Uterus (tissue), 4 donors: ENCODE measurements at regions of chr20 and their contacts with region 1.

Region 1: DNA sequence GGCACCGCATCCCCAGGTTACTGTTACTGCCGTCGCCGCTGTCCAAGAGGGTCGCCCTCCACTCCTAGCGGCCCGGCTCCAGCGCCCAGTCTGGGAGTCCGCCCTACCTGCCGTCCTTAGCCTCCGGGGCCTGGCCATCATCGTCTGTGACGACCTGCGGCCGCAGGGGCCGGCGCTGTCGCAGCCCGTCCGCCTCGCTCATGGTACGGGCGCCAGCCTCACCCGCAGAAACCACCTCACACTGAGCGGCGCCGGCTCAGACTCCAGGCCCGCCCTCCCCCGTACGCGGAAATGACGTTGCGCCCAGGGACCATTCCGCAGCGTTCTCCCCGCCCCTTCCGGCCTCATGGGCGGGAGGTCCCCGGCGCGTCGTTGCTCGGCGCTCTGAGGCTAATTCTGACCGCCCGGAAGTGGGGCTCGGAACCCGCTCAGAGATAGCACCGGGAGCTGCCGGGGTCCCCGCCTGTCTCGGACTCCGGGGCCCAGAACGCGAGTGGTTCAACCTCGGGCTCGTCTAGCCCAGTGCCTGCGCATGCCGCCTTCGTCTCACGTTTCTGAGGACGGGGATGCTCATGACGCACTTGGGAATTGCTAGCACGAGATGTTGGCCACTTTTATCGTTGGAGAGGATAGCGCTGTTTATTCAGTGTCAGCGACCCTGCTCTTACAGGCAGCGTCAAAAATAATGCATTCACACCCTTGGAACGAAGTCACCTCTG is at the start of gene APMAP:
- DNase-seq: peak; percentile 95 to 96
- H3K4me3 ChIP-seq: peak within 1 kb of the TSS; percentile 75 to 94
- H3K27ac ChIP-seq: peak within 1 kb of the TSS; percentile 90 to 94
- H3K4me1 ChIP-seq: peaks cover 0 to 13% of the 10 kb centered on the region in 2 donors
- H3K27me3 ChIP-seq: no peaks in the 10 kb centered on the region
- CTCF ChIP-seq: peak in 2 of 4 experiments; percentile 5 to 20
- POLR2A ChIP-seq: peak; percentile 95 to 98
- total RNA-seq, gene APMAP: 18.8 to 78.7 (median 57.7) TPM

Region 2: DNA sequence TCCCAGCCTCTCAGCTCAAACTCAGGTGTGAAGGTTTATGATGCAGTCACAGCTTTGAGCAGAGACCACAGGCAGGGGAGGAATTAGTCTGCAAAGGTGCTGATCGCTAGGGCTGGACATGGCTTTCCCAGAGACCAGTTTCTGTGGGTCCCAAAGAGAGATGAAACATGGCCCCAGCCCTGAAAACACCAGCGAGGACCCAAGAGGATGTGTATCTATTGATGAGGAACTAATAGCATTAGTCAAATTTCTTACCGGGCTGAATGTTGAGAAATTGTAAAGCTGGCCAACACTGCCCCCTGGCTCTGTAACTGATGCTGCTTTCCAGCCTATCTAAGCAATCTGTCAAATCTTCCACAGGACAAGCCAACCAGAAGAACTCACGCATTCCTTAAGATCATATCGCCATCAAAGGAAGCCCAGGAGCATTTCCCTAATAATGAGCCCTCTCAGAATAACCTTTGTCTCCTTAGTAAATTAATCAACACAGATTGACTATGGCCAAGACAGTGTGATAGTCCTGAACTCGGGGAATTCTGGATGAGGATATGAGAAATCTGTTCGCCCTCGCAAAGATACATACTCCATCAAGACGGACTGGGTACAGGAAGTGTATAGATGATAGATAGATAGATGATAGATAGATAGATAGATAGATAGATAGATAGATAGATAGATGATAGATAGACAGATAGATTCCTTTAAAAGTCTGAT is 73.1 kb after region 1 on chr20:
- intact Hi-C with region 1: loop called (anchors 2 kb)
- DNase-seq: peak; percentile 67 to 69
- H3K4me3 ChIP-seq: no peak overlapping the region
- H3K27ac ChIP-seq: no peak overlapping the region
- H3K4me1 ChIP-seq: no peaks in the 10 kb centered on the region
- H3K27me3 ChIP-seq: no peaks in the 10 kb centered on the region
- CTCF ChIP-seq: peak; percentile 78 to 93 (median 84)
- POLR2A ChIP-seq: no peak

Region 3: DNA sequence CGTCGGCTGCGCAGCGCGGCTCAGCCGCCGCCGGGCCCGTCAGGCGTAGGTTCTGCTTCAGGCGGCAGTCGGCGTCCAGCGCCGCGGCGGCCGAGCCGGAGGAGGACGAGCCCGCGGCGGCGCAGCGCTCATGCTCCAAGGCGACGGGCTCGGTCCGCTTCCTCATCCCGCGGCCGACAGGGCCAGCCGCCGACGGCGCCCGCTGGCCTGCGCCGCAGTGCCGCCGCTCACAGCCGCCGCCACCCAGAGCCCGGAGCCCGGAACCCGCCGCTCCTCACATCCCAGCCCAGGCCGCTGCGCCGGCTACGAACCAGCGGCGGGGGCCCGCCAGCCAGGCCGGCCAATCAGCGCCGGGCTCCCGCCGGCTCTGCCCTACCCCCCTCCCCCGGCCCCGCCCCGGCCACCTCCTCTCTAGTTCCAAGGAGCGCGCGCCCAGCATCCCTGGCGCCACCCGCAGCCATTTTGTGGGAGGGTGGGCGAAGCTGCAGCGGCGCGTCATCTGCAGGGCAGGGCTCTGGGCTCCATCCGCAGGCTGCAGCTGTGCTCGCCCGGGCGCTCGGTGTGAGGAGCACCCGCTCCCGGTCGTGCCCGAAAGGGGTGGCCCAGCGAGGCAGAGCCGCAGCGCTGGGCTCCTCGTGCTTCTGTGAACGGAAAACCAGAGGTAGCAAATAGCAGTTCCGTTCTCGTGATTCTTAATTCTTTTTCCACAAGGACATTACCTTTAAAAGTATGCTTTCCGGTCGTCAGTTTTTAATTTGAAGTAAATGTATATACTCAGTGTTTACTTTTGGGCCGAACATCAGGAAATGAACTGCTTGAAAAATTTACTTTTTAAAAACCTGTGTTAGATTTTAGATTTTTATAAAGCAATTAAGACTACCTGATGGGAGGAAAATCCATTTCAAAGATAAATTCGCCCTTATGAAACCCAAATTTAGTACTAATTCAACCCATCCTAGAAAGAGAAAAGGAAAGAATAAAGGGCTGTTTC is 398.2 kb after region 1 on chr20 and contains the start of gene ABHD12:
- intact Hi-C with region 1: loop called (anchors 10 kb)
- DNase-seq: peak; percentile 95
- H3K4me3 ChIP-seq: peak within 1 kb of the TSS; percentile 56 to 83
- H3K27ac ChIP-seq: peak within 1 kb of the TSS; percentile 83 to 84
- H3K4me1 ChIP-seq: no peaks in the 10 kb centered on the region
- H3K27me3 ChIP-seq: no peaks in the 10 kb centered on the region
- CTCF ChIP-seq: no peak
- POLR2A ChIP-seq: peak; percentile 55 to 75
- total RNA-seq, gene ABHD12: 10.0 to 47.6 (median 36.3) TPM